Activated CD8-positive, alpha-beta T cell treated with anti-CD3 and anti-CD28 coated beads for 36 hours (primary cell): ENCODE measurements at regions of chr14 and their contacts with region 1.

Region 1: GRCh38 chr14:68816262-68816942 is 23.5 kb upstream of the ZFP36L1 start:
- DNase-seq: peak; percentile 92
- ATAC-seq: peak; percentile 74
- H3K4me3 Mint-ChIP-seq: peak overlapping the region; percentile 77
- H3K27ac Mint-ChIP-seq: peak overlapping the region; percentile 96
- H3K4me1 Mint-ChIP-seq: peaks cover 74% of the 10 kb centered on the region
- H3K27me3 Mint-ChIP-seq: no peaks in the 10 kb centered on the region
- CTCF ChIP-seq: peak; percentile 98

Region 2: DNA sequence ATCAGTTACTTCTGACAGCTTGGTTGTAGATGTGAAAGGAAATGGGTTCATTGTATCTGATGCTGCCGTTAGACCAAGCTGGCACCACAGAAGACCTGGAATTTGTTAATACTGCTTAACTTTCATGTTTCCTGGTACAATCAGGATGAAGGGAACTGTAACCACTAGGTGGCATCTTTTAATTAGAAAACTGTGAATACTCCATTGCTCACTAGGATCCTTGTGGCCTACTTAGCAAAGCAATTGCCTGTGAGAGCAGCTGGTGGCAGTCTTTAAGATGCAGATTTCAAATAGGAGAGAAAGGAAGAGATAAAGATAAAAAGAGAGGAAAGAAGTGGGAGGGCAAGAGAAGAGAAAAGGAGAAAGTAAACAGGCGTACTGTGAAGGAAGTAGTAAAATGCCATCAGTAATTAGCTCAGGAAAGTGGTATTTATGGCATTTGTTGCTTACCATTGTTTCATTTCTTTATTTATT is 882.4 kb before region 1 on chr14:
- CTCF ChIA-PET with region 1: interaction called, 7 read pairs
- POLR2A ChIA-PET with region 1: interaction called, 3 read pairs
- intact Hi-C with region 1: loop called (anchors 10 kb)
- DNase-seq: peak; percentile 7
- ATAC-seq: peak; percentile 56
- H3K4me3 Mint-ChIP-seq: no peak overlapping the region
- H3K27ac Mint-ChIP-seq: no peak overlapping the region
- H3K4me1 Mint-ChIP-seq: peaks cover 4% of the 10 kb centered on the region
- H3K27me3 Mint-ChIP-seq: no peaks in the 10 kb centered on the region
- CTCF ChIP-seq: peak; percentile 70

Region 3: GRCh38 chr14:68248481-68249255 is 567.7 kb before region 1 on chr14:
- CTCF ChIA-PET with region 1: interaction called, 44 read pairs
- POLR2A ChIA-PET with region 1: interaction called, 4 read pairs
- intact Hi-C with region 1: loop called (anchors 5 kb)
- DNase-seq: no peak
- ATAC-seq: peak; percentile 70
- H3K4me3 Mint-ChIP-seq: no peak overlapping the region
- H3K27ac Mint-ChIP-seq: no peak overlapping the region
- H3K4me1 Mint-ChIP-seq: peaks cover 41% of the 10 kb centered on the region
- H3K27me3 Mint-ChIP-seq: no peaks in the 10 kb centered on the region
- CTCF ChIP-seq: peak; percentile 87

Region 4: GRCh38 chr14:68780358-68781160 is 35.8 kb before region 1 on chr14:
- CTCF ChIA-PET with region 1: interaction called, 268 read pairs
- POLR2A ChIA-PET with region 1: interaction called, 207 read pairs
- intact Hi-C with region 1: loop called (anchors 5 kb)
- DNase-seq: peak; percentile 55
- ATAC-seq: peak; percentile 24
- H3K4me3 Mint-ChIP-seq: peak overlapping the region; percentile 52
- H3K27ac Mint-ChIP-seq: peak overlapping the region; percentile 90
- H3K4me1 Mint-ChIP-seq: peaks cover 67% of the 10 kb centered on the region
- H3K27me3 Mint-ChIP-seq: no peaks in the 10 kb centered on the region
- CTCF ChIP-seq: no peak

Region 5: GRCh38 chr14:68843471-68844209 is 27.2 kb after region 1 on chr14:
- CTCF ChIA-PET with region 1: interaction called, 68 read pairs
- POLR2A ChIA-PET with region 1: interaction called, 3 read pairs
- intact Hi-C with region 1: no loop called
- DNase-seq: peak; percentile 87
- ATAC-seq: peak; percentile 71
- H3K4me3 Mint-ChIP-seq: peak overlapping the region; percentile 22
- H3K27ac Mint-ChIP-seq: peak overlapping the region; percentile 63
- H3K4me1 Mint-ChIP-seq: peaks cover 39% of the 10 kb centered on the region
- H3K27me3 Mint-ChIP-seq: no peaks in the 10 kb centered on the region
- CTCF ChIP-seq: peak; percentile 91